ENCODE measurements at regions of chr9 and their contacts with region 1.

Region 1: DNA sequence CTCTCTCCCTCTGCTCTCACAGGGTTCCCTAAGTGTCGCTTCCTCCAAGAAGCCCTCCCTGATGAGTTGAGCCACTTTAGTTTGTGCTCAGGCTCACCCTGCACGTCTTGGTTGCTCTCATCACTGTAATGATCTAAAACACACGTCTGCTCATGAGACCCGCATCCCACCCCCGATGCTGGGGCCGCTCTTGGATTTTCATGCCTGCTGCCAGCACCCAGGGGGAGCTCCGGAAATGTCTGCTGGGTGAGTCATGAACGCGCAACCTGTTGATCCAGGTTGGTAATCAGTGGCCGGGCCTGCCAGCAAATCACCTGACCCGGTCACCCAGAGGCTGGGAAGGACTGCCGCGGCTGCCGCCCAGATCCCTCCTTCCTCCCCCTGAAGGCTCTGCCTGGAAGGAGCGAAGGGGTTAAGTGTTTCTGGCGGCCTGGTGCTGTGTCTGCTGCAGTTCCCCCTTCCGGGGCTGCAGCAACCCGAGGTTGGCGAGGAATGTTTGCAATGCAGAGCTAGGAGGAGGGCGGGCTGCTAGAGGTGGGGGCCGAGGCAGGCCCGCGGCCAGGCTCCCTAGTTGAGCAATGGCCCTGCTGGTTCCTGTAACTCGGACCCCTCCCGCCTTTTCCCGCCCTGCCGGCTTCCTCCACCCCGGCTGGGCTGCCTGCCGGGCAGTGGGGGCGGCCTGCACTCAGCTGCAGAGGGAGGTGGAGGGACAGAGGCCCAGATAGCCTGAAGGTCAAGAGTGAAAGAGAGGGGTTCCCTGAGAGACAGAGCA is 156.1 kb upstream of the IER5L start:
- DNase-seq: peak; percentile 49
- H3K4me3 ChIP-seq: no peak overlapping the region
- H3K27ac ChIP-seq: peak overlapping the region; percentile 20
- H3K4me1 ChIP-seq: peaks cover 19% of the 10 kb centered on the region
- H3K27me3 ChIP-seq: no peaks in the 10 kb centered on the region
- CTCF ChIP-seq: no peak
- POLR2A ChIP-seq: no peak

Region 2: DNA sequence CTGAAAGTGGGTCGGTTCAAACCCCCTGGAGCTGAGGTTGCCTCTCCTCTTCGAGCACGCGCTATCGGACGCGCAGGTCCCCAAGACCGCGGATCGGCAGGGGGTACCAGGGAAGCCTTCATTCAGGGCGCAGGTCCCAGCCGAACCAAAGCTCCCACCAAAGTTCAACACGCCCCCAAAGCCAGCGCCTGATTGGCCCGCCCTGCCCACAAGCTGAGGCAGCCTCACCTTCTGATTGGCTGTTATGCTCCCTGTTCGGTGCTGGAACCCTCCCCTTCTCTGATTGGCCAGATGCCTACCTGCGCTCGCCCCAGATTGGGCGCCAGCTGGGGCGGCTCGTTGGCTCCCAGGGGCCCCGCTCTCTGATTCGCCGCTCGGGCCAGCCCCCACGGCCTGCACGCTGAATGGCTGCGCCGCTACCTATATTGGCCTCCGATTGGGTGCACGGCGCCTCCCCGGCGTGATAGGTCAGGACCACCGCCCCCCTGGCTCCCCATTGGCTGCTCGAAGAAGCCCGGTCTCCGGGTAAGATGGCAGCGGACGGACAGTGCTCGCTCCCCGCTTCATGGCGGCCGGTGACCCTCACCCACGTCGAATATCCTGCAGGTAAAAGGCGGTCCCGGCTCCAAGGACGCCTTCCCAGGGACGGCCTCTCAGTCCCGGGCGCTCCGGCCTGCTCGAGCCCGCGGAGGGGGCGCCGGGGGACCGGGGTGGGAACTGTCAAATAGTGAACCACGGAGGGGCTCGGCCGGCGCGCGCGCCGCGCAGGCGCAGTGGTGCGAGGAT is 253.3 kb before region 1 on chr9 and contains the start of gene DOLPP1:
- CTCF ChIA-PET with region 1: no interaction called
- POLR2A ChIA-PET with region 1: no interaction called
- dilution Hi-C with region 1: no loop called
- intact Hi-C with region 1: no loop called
- DNase-seq: peak; percentile 100
- H3K4me3 ChIP-seq: peak within 1 kb of the TSS; percentile 62 to 81 (median 75)
- H3K27ac ChIP-seq: no peak within 1 kb of the TSS
- H3K4me1 ChIP-seq: peaks cover 16% of the 10 kb centered on the region
- H3K27me3 ChIP-seq: no peaks in the 10 kb centered on the region
- CTCF ChIP-seq: no peak
- POLR2A ChIP-seq: peak; percentile 6
- total RNA-seq, gene DOLPP1: 17.7 and 26.6 TPM in 2 replicates

Region 3: DNA sequence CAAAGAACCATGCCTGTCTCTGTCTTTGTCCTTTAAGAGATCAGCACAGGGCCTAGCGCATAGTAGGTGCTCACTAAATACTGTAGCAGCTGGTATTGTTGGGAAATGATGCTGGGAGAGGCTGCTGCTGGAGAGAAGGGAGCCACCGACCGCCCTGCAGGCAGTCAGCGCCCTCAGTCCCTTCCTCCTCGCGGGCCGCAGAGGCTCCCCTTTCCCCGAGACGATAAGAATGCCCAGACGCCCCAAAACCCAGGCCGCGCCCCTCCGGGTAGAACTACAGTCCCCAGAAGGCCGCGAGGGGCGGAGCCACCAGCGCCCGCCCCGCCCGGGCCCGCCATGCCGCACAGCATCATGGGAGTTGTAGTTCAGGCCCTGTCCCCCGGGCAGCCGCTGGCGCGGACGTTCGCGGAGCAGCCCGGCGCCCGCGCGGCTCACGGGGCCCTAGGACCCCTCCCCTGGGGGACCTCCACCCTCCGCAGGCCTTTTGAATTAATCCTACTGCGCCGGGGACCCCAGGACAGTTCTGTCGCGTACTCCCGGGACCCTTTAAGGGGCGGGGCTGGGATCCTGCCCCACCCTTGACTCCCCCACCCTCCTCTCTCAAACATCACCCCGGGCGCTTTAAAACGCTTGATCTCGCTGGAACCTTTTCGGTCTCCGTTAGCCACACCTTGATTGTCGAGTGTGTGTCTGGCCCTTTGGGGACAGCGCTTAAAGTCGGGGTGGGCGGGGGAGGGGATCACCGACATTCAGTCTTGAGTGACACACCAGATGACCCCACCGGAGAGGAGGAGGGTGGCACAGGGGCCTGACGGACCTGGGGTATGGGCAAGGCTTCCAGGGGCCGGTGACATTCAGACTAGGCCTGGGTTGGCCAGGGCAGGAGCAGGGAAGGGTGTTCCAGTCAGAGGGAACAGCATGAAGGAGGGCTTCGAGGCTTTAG is 131.3 kb before region 1 on chr9:
- CTCF ChIA-PET with region 1: no interaction called
- POLR2A ChIA-PET with region 1: no interaction called
- dilution Hi-C with region 1: no loop called
- intact Hi-C with region 1: loop called (anchors 10 kb)
- DNase-seq: peak; percentile 72
- H3K4me3 ChIP-seq: peak overlapping the region; percentile 59 to 81 (median 62)
- H3K27ac ChIP-seq: peak overlapping the region; percentile 71
- H3K4me1 ChIP-seq: peaks cover 6% of the 10 kb centered on the region
- H3K27me3 ChIP-seq: no peaks in the 10 kb centered on the region
- CTCF ChIP-seq: no peak
- POLR2A ChIP-seq: no peak

Region 4: DNA sequence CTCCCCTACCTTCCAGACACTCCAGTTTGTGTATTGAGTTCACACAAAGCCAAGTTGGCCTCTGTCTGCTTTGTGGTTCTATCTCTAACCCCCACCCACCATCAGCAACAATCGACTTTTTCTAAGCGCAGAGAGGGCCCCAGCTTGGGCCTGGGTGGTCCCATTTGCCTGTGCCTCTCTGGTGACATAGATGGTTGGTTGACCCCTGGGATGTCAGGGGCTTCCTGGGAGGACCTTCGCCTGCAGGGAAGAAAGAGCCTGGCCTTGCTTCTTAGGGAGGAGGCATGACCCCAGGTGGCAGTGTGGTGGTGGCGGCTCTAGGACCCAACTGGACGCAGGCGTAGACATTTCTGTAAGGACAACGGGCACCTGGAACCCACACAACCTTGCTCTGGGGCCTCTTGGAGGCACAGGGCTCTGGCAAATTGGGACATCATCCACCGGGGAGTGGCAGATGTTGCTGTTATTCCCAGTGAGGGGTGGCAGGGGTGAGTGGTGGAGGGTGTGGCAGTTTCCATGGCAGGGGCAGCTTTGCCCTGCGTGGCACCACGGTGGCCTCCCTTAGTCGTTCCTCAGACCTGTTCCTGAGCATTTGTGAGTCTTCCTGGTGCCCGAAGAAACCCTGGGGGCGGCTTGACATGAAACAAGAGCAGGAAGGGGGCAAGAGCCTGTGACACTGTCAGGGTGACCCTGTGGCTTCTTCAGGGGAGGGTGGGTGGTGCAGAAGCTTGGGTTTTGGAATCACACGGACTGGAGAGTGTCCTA is 14.9 kb after region 1 on chr9:
- CTCF ChIA-PET with region 1: no interaction called
- POLR2A ChIA-PET with region 1: no interaction called
- dilution Hi-C with region 1: no loop called
- intact Hi-C with region 1: no loop called
- DNase-seq: no peak
- H3K4me3 ChIP-seq: no peak overlapping the region
- H3K27ac ChIP-seq: no peak overlapping the region
- H3K4me1 ChIP-seq: no peaks in the 10 kb centered on the region
- H3K27me3 ChIP-seq: no peaks in the 10 kb centered on the region
- CTCF ChIP-seq: no peak
- POLR2A ChIP-seq: no peak

Region 5: DNA sequence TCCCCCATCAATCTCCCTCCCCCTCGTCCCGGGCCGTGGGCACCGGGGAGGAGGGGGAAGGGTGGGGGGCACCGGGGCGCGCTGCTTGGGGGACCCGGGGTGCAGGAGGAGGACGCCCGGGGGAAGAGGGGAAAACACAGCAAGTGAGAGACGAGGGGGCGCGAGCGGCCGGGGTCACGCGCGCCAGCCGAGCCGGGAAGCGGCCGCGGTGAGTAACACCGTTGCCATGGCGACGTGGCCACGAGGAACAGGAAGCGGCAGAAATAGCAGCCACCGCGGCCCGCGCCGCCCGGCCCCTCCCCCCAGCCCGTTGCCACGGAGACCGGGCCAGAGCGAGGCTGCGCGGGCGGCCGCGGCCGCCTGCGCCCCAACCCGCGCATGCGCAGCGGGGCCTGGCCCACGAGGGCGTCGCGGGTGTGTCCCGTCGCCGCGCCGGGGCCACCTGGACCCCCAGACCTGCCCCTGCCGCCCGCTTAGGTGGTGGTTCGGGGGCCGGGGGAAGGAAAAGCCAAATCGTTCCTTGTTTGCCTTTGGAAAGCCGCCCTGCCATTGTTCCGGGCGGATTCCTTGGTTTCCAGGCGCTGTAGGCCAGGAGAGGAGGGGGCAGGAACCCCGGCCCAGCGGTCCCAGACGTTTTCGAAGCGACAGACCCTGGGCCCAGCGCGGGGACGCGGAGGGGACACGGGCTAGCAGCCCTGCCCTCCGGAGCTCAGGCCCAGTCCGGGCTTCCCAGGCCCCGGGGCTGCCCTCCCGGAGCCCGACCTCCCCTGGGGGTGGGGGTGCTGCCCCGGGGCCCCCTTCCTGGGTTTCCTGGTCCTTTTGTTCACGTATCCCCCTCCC is 79.6 kb after region 1 on chr9:
- CTCF ChIA-PET with region 1: no interaction called
- POLR2A ChIA-PET with region 1: no interaction called
- dilution Hi-C with region 1: no loop called
- intact Hi-C with region 1: loop called (anchors 5 kb)
- DNase-seq: peak; percentile 95
- H3K4me3 ChIP-seq: peak overlapping the region in 1 of 3 experiments; percentile 35
- H3K27ac ChIP-seq: peak overlapping the region; percentile 96
- H3K4me1 ChIP-seq: peaks cover 15% of the 10 kb centered on the region
- H3K27me3 ChIP-seq: no peaks in the 10 kb centered on the region
- CTCF ChIP-seq: no peak
- POLR2A ChIP-seq: peak; percentile 70

Region 6: DNA sequence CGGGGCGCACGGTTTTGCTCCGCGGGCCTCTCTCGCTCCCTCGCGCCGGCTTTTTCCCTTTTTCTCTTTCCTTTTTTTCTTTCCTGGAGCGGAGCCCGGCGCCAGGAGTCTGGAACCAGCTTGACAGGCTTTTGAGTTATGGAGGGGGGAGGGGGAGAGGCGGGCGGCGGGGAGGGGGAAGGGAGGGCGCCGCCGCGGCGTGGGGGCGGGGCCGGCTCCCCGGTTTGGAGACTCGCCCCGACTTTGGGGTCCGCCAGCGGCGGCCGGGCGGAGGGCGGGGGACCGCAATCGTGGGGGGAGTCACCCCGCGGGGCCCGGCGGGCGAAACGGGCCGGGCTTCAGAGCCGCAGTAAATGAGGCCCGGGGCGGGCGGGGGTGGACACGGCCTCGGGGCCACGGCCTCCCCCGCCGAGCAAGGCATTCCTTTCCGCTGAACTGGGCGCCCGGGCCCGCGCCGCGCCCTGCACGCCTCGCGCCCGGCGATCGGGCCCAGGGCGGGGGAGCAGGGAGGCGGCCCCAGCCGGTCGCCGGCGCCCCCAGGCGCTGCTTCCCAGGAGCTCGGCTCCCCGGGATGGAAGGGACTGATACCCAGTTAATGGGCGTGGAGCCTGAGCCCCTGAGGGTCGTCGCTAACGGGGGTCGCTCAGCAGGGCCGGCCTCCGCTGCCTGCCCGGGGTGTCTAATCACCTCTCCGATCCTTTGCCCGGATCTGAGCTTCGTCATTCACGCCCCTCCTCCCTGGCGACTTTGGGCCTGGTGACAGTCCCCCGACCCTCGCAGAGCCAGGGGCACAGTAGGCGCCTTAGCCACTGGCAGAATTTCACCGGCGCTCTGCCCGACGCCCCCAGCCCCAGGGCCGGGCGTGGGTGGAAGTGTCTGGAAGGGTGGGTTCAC is 148.6 kb after region 1 on chr9:
- CTCF ChIA-PET with region 1: no interaction called
- POLR2A ChIA-PET with region 1: no interaction called
- dilution Hi-C with region 1: no loop called
- intact Hi-C with region 1: loop called (anchors 1 kb)
- DNase-seq: peak; percentile 69
- H3K4me3 ChIP-seq: peak overlapping the region in 1 of 3 experiments; percentile 40
- H3K27ac ChIP-seq: peak overlapping the region; percentile 93
- H3K4me1 ChIP-seq: peaks cover 31% of the 10 kb centered on the region
- H3K27me3 ChIP-seq: no peaks in the 10 kb centered on the region
- CTCF ChIP-seq: no peak
- POLR2A ChIP-seq: no peak

Region 7: DNA sequence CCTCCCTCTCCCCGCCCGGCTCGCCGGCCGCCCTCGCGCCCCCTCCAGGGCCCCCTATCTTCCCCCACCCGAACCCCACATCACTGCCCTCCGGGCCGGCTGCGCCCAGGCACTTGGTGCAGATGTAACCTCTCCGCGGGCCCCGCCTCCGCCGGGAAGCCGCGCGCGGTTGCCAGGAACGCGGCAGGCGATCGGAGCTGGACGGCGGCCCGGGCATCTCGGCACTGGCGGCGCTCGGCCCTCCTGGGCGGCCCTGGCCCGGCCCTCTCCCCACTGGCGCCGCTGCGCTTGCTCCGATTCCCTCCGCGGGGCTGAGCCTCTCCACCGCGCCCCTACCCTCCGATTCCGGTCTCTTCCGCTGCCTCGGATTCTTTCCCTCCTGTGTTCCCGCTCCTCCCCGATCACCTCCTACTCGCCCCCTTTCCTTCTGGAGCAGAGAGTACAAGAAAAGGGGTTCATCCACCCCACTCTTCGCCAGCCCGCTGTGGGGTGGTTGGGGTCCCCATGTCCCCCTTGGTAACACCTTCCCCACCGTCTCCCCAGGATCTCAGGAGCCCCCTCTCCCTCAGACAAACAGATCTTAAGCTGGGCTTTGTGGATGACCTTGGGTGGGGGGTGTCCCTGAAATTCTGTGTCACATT is 216.2 kb after region 1 on chr9:
- CTCF ChIA-PET with region 1: no interaction called
- POLR2A ChIA-PET with region 1: no interaction called
- dilution Hi-C with region 1: no loop called
- intact Hi-C with region 1: loop called (anchors 5 kb)
- DNase-seq: peak; percentile 35
- H3K4me3 ChIP-seq: peak overlapping the region; percentile 16 to 40 (median 29)
- H3K27ac ChIP-seq: no peak overlapping the region
- H3K4me1 ChIP-seq: peaks cover 3% of the 10 kb centered on the region
- H3K27me3 ChIP-seq: peaks cover 3% of the 10 kb centered on the region in 2 experiments
- CTCF ChIP-seq: no peak
- POLR2A ChIP-seq: no peak

Measured in endothelial cell of umbilical vein (primary cell).